HepG2 (cell line): ENCODE measurements at regions of chr6 and their contacts with region 1.

Region 1: DNA sequence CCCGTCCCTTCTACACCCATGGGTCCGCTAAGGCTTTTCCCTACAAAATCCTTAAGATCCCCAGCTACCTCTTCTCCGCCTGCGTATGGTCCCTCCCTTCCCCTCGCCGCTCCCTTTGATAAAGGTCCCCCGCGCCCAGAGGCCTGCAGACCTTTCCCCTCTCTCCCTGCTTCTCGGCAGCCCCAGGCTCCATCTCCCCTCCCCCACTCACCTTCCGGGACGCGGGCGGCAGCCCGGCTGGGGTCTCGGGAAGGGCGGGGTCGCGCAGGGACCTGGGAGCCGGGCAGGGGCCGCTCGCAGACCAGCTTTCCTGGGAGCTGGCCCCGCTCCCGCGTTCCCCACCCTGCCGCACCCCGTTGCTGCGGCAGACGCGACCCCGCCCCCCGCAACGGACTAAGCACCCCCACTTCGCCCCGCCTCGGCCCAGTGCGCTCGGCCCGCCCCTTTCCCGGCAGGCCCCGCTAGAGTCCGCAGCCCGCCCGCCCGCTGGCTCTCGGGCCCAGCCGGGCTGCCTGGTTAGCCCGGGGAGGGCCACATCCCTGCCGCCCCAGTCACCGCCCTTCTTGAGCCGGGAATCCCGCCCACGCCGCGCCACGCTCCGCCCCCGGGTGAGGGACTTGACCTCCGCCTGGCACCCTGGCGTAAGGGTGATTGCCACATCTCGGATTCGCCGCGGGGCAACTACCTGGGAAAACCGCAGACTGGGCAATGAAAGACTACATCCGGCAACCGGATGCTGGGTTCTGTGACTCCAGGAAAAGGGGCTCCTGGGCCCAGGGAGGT is at the start of gene FLOT1:
- DNase-seq: peak; percentile 97
- ATAC-seq: peak; percentile 87
- H3K4me3 ChIP-seq: peak within 1 kb of the TSS; percentile 91 to 98 (median 98)
- H3K27ac ChIP-seq: peak within 1 kb of the TSS; percentile 81
- H3K4me1 ChIP-seq: peaks cover 78% of the 10 kb centered on the region
- H3K27me3 ChIP-seq: no peaks in the 10 kb centered on the region; a peak in 1 of 5 replicates
- CTCF ChIP-seq: peak; percentile 38
- EP300 ChIP-seq: peak; percentile 5 to 52; a peak in 2 of 4 replicates
- POLR2A ChIP-seq: no peak; a peak in 2 of 4 replicates
- RAD21 ChIP-seq: peak; percentile 64
- total RNA-seq, gene FLOT1: 77.8 and 82.3 TPM in 2 replicates

Region 2: GRCh38 chr6:30590994-30591393 is 151.5 kb before region 1 on chr6:
- CTCF ChIA-PET with region 1: no interaction called
- POLR2A ChIA-PET with region 1: no interaction called
- in situ Hi-C with region 1: no loop called
- intact Hi-C with region 1: no loop called
- DNase-seq: no peak
- ATAC-seq: no peak
- H3K4me3 ChIP-seq: no peak overlapping the region
- H3K27ac ChIP-seq: no peak overlapping the region
- H3K4me1 ChIP-seq: no peaks in the 10 kb centered on the region
- H3K27me3 ChIP-seq: no peaks in the 10 kb centered on the region
- CTCF ChIP-seq: no peak
- EP300 ChIP-seq: no peak
- POLR2A ChIP-seq: no peak
- RAD21 ChIP-seq: no peak

Region 3: GRCh38 chr6:30678964-30679726 is 63.4 kb before region 1 on chr6:
- CTCF ChIA-PET with region 1: no interaction called
- POLR2A ChIA-PET with region 1: interaction called, 4 read pairs
- in situ Hi-C with region 1: no loop called
- intact Hi-C with region 1: loop called (anchors 1 kb)
- DNase-seq: peak; percentile 83
- ATAC-seq: peak; percentile 93
- H3K4me3 ChIP-seq: peak overlapping the region; percentile 43 to 66 (median 44)
- H3K27ac ChIP-seq: peak overlapping the region; percentile 32
- H3K4me1 ChIP-seq: peaks cover 41% of the 10 kb centered on the region
- H3K27me3 ChIP-seq: no peaks in the 10 kb centered on the region
- CTCF ChIP-seq: peak; percentile 100
- EP300 ChIP-seq: 0 out of 4 replicates have a peak, but pooled peaks of 1 of the 2 experiments have one; percentile 35
- POLR2A ChIP-seq: no peak
- RAD21 ChIP-seq: peak; percentile 99

Region 4: DNA sequence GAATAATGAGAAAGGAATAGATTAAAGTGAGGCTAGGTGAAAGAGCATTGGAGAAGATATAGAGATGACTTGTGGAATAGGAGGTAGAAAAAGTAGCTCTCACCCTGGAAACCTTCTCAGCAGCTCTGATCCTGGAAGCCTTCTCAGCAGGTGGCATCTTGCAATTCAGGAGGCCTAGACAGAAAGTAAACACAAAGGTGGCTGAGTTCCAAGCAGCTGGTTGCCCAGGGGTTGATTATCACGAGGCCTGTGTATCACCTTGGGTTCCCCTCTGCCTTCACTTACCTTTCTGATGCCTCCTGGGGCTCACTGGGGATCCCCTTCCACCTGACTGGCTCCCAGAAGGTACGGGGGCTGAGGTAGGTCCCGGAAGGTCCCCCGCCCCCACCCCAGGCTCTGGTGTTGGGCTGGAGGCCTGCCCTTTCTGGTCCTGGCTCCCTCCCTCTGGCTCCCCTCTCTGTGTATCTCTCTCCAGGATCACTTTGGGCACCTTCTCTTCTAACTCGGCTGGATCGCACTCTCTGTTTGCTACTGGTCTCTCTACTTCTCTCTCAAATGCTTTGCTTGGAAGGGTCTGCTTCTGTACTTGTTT is 35.1 kb before region 1 on chr6:
- CTCF ChIA-PET with region 1: no interaction called
- POLR2A ChIA-PET with region 1: no interaction called
- in situ Hi-C with region 1: no loop called
- intact Hi-C with region 1: no loop called
- DNase-seq: no peak
- ATAC-seq: no peak
- H3K4me3 ChIP-seq: no peak overlapping the region
- H3K27ac ChIP-seq: no peak overlapping the region
- H3K4me1 ChIP-seq: peaks cover 7% of the 10 kb centered on the region; the same call in 1 of the 2 replicates
- H3K27me3 ChIP-seq: no peaks in the 10 kb centered on the region
- CTCF ChIP-seq: no peak
- EP300 ChIP-seq: no peak
- POLR2A ChIP-seq: no peak
- RAD21 ChIP-seq: no peak

Region 5: DNA sequence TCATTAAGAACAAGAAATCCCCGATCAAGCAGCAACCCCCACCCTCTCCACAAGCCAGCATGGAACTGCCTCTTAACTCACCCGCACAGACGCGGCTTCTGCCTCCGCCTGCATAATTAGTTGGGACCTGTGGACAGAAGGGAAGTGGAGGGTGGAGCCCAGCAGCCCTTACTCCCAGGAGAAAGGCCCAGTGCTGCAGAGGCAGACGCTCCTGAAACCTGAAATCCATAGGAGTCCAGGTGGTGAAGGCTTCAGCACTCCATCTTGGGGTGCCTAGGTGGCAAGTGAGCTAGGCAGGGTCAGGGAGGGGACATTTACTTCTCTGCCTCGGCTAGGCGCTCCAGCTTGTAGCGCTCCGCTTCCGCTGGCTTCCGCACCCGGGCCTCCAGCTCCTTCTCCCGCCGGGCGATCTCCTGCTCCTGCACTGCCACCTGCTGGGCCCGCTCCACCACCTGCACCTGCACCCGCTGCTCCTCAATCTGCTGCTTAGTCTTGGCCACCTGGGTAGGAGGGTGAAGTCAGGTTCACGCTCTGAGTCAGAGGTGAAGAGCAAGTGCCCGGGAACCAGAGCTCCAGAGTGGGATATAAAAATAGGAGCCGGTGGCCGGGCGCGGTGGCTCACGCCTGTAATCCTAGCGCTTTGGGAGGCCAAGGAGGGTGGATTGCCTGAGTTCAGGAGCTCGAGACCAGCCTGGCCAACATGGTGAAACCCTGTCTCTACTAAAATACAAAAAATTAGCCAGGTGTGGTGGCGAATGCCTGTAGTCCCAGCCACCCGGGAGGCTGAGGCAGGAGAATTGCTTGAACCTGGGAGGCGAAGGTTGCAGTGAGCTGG is 11.7 kb before region 1 on chr6:
- CTCF ChIA-PET with region 1: interaction called, 3 read pairs
- POLR2A ChIA-PET with region 1: interaction called, 31 read pairs
- in situ Hi-C with region 1: no loop called
- intact Hi-C with region 1: no loop called
- DNase-seq: peak; percentile 67
- ATAC-seq: peak; percentile 76
- H3K4me3 ChIP-seq: no peak overlapping the region
- H3K27ac ChIP-seq: no peak overlapping the region
- H3K4me1 ChIP-seq: peaks cover 28% of the 10 kb centered on the region; the same call in 1 of the 2 replicates
- H3K27me3 ChIP-seq: no peaks in the 10 kb centered on the region
- CTCF ChIP-seq: peak; percentile 94
- EP300 ChIP-seq: no peak
- POLR2A ChIP-seq: peak in 1 of 2 experiments; percentile 37; a peak in 1 of 4 replicates
- RAD21 ChIP-seq: peak; percentile 95

Region 6: GRCh38 chr6:30769088-30769852 is 26.8 kb after region 1 on chr6:
- CTCF ChIA-PET with region 1: no interaction called
- POLR2A ChIA-PET with region 1: interaction called, 414 read pairs
- in situ Hi-C with region 1: no loop called
- intact Hi-C with region 1: loop called (anchors 1 kb)
- DNase-seq: peak; percentile 96
- ATAC-seq: peak; percentile 90
- H3K4me3 ChIP-seq: peak overlapping the region; percentile 35 to 69 (median 44)
- H3K27ac ChIP-seq: peak overlapping the region; percentile 98
- H3K4me1 ChIP-seq: peaks cover 79% of the 10 kb centered on the region
- H3K27me3 ChIP-seq: no peaks in the 10 kb centered on the region
- CTCF ChIP-seq: no peak; the same call in 1 of the 2 replicates
- EP300 ChIP-seq: peak; percentile 90 to 91
- POLR2A ChIP-seq: peak; percentile 88 to 91
- RAD21 ChIP-seq: peak; percentile 27; the same call in 1 of the 2 replicates

Region 7: DNA sequence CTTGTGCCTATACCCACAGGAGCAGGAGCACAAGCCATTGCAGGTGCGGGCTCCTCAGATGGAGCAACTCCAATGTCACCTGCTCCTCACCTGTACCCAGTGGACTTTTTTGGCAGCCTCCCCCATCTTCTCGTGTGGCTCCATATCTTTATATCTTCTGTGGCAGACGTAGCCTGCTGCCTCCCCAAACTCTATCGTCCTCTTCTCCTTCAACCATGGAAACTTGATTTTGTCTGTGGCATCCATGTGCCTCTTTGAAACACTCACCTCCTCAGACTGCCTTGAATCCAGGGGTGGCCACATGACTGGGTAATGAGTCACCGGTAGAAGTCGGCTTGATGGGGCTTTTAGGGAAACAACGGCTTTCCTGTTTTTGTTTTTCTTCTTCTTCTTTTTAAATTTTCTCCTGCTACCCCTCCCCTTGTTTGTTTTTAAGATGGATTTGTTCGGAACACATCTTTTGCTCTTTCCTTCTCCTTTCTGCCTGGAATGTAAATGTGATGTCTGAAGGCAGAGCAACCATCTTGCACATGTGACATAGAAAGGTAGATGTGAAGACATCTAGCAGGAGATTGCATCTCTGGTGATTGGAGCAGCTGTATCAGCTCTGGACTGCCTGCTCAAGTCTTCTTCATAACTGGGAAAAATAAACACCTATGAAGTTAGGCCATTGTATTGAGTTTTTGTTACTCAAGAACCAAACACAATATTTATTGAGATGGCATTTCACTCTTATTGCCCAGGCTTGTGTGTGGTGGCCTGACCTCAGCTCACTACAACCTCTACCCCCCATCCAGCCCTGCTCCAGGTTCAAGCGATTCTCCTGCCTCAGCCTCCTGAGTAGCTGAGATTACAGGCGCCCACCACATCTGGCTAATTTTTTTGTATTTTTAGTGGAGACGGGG is 71.9 kb after region 1 on chr6:
- CTCF ChIA-PET with region 1: no interaction called
- POLR2A ChIA-PET with region 1: interaction called, 71 read pairs
- in situ Hi-C with region 1: no loop called
- intact Hi-C with region 1: no loop called
- DNase-seq: no peak
- ATAC-seq: peak; percentile 62
- H3K4me3 ChIP-seq: no peak overlapping the region
- H3K27ac ChIP-seq: no peak overlapping the region
- H3K4me1 ChIP-seq: peaks cover 45% of the 10 kb centered on the region
- H3K27me3 ChIP-seq: no peaks in the 10 kb centered on the region
- CTCF ChIP-seq: no peak
- EP300 ChIP-seq: peak in 1 of 2 experiments; percentile 31; a peak in 1 of 4 replicates
- POLR2A ChIP-seq: no peak
- RAD21 ChIP-seq: no peak

Region 8: GRCh38 chr6:30828027-30828960 is 85.8 kb after region 1 on chr6:
- CTCF ChIA-PET with region 1: interaction called, 6 read pairs
- POLR2A ChIA-PET with region 1: interaction called, 71 read pairs
- in situ Hi-C with region 1: loop called (anchors 5 kb)
- intact Hi-C with region 1: loop called (anchors 1 kb)
- DNase-seq: peak; percentile 85
- ATAC-seq: peak; percentile 92
- H3K4me3 ChIP-seq: peak overlapping the region; percentile 45 to 76 (median 63)
- H3K27ac ChIP-seq: peak overlapping the region; percentile 69
- H3K4me1 ChIP-seq: peaks cover 61% of the 10 kb centered on the region
- H3K27me3 ChIP-seq: no peaks in the 10 kb centered on the region
- CTCF ChIP-seq: peak; percentile 97
- EP300 ChIP-seq: peak in 1 of 2 experiments; percentile 52; a peak in 1 of 4 replicates
- POLR2A ChIP-seq: no peak
- RAD21 ChIP-seq: peak; percentile 97